H1 (cell line): ENCODE measurements at regions of chr6 and their contacts with region 1.

Region 1: DNA sequence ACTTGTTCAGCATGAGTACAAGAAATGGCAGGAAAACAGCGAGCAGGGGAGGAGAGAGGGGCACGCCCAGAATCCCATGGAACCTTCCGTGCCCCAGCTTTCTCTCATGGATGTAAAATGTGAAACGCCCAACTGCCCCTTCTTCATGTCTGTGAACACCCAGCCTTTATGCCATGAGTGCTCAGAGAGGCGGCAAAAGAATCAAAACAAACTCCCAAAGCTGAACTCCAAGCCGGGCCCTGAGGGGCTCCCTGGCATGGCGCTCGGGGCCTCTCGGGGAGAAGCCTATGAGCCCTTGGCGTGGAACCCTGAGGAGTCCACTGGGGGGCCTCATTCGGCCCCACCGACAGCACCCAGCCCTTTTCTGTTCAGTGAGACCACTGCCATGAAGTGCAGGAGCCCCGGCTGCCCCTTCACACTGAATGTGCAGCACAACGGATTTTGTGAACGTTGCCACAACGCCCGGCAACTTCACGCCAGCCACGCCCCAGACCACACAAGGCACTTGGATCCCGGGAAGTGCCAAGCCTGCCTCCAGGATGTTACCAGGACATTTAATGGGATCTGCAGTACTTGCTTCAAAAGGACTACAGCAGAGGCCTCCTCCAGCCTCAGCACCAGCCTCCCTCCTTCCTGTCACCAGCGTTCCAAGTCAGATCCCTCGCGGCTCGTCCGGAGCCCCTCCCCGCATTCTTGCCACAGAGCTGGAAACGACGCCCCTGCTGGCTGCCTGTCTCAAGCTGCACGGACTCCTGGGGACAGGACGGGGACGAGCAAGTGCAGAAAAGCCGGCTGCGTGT is 11.6 kb downstream of the TNFAIP3 start:
- DNase-seq: peak; percentile 25 to 84
- H3K4me3 ChIP-seq: no peak overlapping the region
- H3K27ac ChIP-seq: no peak overlapping the region
- H3K4me1 ChIP-seq: peaks cover 0 to 11% (median 5%) of the 10 kb centered on the region in 4 experiments; a peak in 4 of 7 replicates
- H3K27me3 ChIP-seq: no peaks in the 10 kb centered on the region
- CTCF ChIP-seq: peak; percentile 65 to 78 (median 69)
- EP300 ChIP-seq: no peak
- POLR2A ChIP-seq: no peak
- RAD21 ChIP-seq: peak; percentile 33 to 49; a peak in 3 of 4 replicates

Region 2: DNA sequence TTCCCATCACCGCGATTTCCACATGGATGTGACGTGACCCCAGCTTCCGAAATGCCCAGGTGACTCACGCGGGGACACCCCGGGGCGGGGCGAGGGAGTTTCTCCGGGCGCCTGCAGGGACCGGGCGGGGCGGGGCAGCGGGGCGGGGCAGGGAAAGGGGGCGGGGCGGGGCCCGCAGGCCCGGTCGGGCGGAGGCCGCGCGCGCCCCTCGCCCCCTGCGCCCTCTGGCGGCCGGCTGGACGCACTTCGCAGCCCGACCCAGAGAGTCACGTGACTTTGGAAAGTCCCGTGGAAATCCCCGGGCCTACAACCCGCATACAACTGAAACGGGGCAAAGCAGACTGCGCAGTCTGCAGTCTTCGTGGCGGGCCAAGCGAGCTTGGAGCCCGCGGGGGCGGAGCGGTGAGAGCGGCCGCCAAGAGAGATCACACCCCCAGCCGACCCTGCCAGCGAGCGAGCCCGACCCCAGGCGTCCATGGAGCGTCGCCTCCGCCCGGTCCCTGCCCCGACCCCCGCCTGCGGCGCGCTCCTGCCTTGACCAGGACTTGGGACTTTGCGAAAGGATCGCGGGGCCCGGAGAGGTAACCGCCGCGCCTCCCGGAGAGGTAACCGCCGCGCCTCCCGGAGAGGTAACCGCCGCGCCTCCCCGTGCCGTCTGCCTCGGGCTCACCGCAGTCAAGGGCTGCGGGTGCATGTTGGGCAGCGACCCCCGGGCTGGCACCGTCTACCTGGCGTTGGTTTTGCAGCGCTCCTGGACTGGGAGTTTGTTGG is 11.6 kb before region 1 on chr6 and contains the start of gene TNFAIP3:
- CTCF ChIA-PET with region 1: interaction called, 52 read pairs
- POLR2A ChIA-PET with region 1: interaction called, 3 read pairs
- DNase-seq: peak; percentile 50 to 88
- H3K4me3 ChIP-seq: peak within 1 kb of the TSS; percentile 46 to 88 (median 84)
- H3K27ac ChIP-seq: no peak within 1 kb of the TSS
- H3K4me1 ChIP-seq: peaks cover 5 to 17% (median 9%) of the 10 kb centered on the region in 4 experiments
- H3K27me3 ChIP-seq: peaks cover 0 to 16% (median 8%) of the 10 kb centered on the region in 4 experiments; a peak in 5 of 7 replicates
- CTCF ChIP-seq: peak; percentile 72 to 82 (median 73)
- EP300 ChIP-seq: peak in 1 of 2 experiments; percentile 52; a peak in 1 of 3 replicates
- POLR2A ChIP-seq: no peak; a peak in 1 of 3 replicates
- RAD21 ChIP-seq: peak; percentile 41 to 70
- total RNA-seq, gene TNFAIP3: 1.6 and 2.2 TPM in 2 replicates

Region 3: GRCh38 chr6:137892271-137892708 is 13.6 kb after region 1 on chr6:
- CTCF ChIA-PET with region 1: interaction called, 11 read pairs
- POLR2A ChIA-PET with region 1: no interaction called
- DNase-seq: no peak
- H3K4me3 ChIP-seq: no peak overlapping the region
- H3K27ac ChIP-seq: no peak overlapping the region
- H3K4me1 ChIP-seq: no peaks in the 10 kb centered on the region
- H3K27me3 ChIP-seq: no peaks in the 10 kb centered on the region
- CTCF ChIP-seq: no peak
- EP300 ChIP-seq: no peak
- POLR2A ChIP-seq: no peak
- RAD21 ChIP-seq: no peak